Ascending aorta (tissue), 2 donors: ENCODE measurements at regions of chr6 and their contacts with region 1.

Region 1: DNA sequence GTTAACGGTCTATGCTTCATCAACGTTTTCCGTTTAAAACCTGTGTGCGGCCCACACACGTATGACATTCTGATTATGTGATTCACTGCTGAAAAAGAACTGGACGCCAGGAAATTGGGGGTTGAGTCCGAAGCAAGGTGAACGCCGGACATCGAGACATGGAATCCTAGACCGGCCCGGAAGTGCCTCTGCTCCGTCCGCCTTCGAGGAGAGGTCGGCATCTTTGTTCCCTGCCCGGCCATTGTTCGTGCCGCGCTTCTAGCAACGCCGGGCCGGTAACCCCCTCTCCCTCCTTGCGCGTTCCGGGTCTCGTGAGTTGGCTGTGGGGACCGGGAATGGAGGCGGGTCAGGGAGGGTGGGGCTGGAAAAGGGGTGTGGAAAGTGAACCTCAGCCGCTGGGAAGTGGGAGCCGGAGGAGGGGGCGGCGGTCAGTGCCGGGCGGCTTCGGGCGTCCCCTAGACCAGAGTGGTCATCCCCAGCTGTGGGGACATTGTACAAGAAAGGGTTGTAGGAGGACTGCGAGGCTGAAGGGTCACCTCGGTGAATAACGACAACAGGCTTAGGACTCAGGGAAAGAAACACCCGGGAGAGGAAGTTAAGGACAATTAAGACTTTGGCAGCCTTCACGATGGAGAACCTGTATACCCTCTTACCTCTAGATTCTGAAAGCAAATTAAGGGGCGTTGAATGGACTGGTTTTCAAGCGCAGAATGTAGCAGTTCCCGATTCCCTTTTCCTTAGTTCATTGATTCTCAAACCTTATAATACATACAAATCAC is at the start of gene ZSCAN9:
- DNase-seq: peak; percentile 44 to 95
- H3K4me3 ChIP-seq: peak within 1 kb of the TSS; percentile 67 to 73
- H3K27ac ChIP-seq: peak within 1 kb of the TSS; percentile 75 to 80
- H3K4me1 ChIP-seq: peaks cover 0 to 4% of the 10 kb centered on the region in 2 donors
- H3K27me3 ChIP-seq: no peaks in the 10 kb centered on the region
- CTCF ChIP-seq: no peak
- total RNA-seq, gene ZSCAN9: 3.7 TPM

Region 2: DNA sequence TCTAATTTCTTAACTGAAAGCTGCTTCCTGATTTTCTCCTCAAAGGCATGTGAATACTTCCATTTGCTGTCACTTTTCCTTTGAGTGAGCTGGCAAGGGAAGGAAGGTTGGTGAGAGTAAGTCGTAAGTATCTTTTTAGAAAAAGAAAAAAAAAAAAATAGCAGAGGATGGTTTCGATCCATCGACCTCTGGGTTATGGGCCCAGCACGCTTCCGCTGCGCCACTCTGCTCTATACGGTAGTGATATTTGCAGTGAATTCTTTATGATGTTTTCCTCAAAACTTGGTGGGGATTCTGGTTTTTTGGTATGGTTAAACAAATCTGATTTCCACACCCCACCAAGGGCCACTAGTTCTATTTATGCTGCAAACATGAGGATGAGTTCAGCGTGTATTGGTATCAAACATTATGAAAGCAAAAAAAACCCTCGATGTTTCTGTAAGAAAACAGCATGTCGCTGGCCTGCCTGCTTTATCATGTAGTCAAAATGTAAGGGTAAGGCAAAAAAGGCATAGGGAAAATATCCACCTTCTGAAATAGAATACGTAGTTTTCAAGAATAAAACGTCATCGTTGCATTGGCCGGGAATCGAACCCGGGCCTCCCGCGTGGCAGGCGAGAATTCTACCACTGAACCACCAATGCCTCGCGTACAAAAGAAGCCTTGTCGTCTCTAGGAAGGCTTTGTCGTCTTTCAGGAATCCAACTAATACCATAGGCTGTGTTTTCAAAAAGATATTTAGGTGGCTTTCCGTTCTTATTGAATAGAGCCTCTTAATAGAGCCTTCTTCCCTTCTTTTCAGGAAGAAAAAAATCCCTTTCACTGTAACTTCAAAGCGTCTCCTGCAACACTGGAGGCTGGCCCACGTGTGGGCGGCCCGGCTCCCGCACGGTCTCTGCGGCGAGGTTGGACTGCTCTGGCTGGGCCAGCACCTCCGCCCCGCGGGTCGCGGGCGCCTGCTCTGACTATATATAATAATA is 322.6 kb before region 1 on chr6:
- intact Hi-C with region 1: loop called (anchors 10 kb)
- DNase-seq: peak in 1 of 2 donors; percentile 93
- H3K4me3 ChIP-seq: peak overlapping the region; percentile 59 to 73
- H3K27ac ChIP-seq: peak overlapping the region; percentile 87 to 94
- H3K4me1 ChIP-seq: peaks cover 0 to 3% of the 10 kb centered on the region in 2 donors
- H3K27me3 ChIP-seq: no peaks in the 10 kb centered on the region
- CTCF ChIP-seq: no peak

Region 3: GRCh38 chr6:28136585-28137504 is 88.4 kb before region 1 on chr6:
- intact Hi-C with region 1: loop called (anchors 2 kb)
- DNase-seq: peak; percentile 60 to 95
- H3K4me3 ChIP-seq: peak overlapping the region; percentile 74 to 97
- H3K27ac ChIP-seq: peak overlapping the region; percentile 95 to 98
- H3K4me1 ChIP-seq: peaks cover 0 to 26% of the 10 kb centered on the region in 2 donors
- H3K27me3 ChIP-seq: no peaks in the 10 kb centered on the region
- CTCF ChIP-seq: no peak

Region 4: DNA sequence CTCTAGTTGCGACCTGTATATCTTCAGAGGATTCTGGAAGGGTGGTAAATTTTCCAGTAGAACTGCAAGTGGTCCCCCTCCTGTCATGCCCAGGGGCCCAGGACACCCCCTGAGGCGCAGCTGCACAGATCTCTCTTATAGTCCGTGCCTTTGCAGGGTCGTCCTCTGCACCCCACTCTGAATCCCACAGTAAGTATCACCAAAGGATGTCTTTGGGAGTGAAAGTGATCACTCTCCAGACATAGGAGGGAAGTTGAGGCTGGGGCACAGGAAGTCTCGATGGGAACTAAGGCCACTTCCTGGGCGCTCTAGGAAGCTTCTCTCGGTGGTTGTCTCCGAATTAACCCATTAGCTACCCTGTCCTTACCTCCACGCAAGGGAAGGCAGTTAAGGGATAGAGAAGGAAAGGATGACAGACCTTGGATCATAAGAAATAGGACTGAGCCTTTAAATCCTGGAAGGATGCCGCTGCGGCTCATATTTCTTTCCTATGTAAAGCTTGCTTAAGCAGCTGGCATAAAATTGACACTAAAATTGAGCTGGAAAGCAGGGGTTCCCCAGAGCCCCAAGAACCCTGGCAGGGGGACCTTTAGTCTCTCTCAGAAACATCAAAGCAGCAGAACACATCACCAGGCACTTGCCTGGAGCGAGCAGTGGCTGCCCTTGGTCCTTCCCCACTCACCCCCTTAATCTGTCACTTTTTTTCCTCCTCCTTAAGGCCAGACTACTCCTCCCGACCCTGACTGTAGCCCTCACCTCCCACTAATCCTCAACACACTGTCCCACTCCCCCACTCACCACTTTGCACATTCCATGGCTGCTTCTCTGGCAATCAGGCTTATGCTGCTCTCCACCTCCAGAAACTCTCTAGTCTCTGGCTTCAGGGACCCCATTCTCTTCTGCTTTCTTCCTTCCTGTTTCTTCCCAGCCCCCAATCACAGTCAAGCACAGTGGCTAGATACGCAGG is 27.0 kb after region 1 on chr6 and contains the start of gene ZKSCAN4:
- intact Hi-C with region 1: loop called (anchors 1 kb)
- DNase-seq: peak; percentile 25 to 84
- H3K4me3 ChIP-seq: peak within 1 kb of the TSS; percentile 72 to 73
- H3K27ac ChIP-seq: peak within 1 kb of the TSS; percentile 28 to 53
- H3K4me1 ChIP-seq: peaks cover 3 to 13% of the 10 kb centered on the region in 2 donors
- H3K27me3 ChIP-seq: no peaks in the 10 kb centered on the region
- CTCF ChIP-seq: no peak
- total RNA-seq, gene ZKSCAN4: 3.1 TPM

Region 5: GRCh38 chr6:28266962-28267694 is 41.9 kb after region 1 on chr6 and contains the start of gene ZSCAN26:
- intact Hi-C with region 1: loop called (anchors 5 kb)
- DNase-seq: peak; percentile 21 to 89
- H3K4me3 ChIP-seq: peak within 1 kb of the TSS; percentile 70 to 80
- H3K27ac ChIP-seq: peak within 1 kb of the TSS; percentile 76 to 82
- H3K4me1 ChIP-seq: peaks cover 0 to 15% of the 10 kb centered on the region in 2 donors
- H3K27me3 ChIP-seq: no peaks in the 10 kb centered on the region
- CTCF ChIP-seq: no peak
- total RNA-seq, gene ZSCAN26: 2.6 TPM